ENCODE measurements at regions of chr6 and their contacts with region 1.

Region 1: DNA sequence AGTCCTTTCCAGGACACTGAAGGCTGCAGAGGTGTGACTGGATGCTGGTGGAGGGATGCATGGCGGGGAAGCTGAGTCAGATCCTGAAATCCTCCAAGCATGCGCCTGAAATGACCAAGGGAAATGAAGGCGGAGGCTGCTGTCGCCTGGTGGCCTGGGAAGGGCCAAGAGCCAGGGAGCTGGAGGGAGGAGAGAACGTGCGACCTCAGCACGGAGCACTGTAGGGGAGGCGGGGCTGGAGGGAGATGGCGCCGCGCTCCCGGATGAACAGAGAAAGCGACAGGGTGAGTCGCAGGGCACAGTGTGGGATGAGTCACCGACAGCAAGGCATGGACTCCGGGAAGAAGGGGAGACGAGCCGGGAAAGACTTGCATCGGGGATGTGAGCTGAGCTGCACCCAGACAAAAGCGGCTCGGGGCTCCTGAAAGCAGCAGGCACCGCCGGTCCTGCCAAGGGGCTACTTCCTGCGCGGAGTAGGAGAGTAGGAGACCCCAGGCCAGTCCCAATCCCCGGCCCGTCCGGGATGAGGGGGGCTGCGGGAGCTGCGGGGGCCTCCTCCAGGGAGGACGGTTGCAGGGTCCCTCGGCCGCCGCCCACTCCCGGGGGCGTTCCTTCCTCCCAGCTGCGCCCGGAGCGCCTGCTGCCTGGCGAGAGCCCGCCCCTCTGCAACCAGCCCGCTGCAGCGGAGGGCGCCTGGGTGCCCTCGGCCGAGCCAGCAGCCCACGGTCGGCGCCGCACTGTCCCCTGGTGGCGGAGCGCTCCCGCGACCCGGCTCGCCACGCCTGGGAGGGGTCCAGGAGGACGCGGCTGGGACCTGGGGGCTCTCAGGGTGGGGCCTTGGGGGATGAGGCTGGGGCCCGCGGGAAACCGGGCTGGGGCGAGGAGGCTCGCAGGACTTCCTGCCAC is 11.0 kb upstream of the NQO2 start:
- DNase-seq: peak; percentile 77 to 98 (median 88)

Region 2: GRCh38 chr6:2744209-2744771 is 244.4 kb before region 1 on chr6:
- intact Hi-C with region 1: no loop called
- DNase-seq: peak in 6 of 10 donors; percentile 42 to 90 (median 67)

Region 3: GRCh38 chr6:2846873-2847224 is 141.8 kb before region 1 on chr6:
- intact Hi-C with region 1: loop called (anchors 1 kb)
- DNase-seq: no peak

Region 4: GRCh38 chr6:2952557-2953095 is 36.1 kb before region 1 on chr6:
- intact Hi-C with region 1: loop called (anchors 1 kb)
- DNase-seq: peak; percentile 36 to 95 (median 64)

Region 5: DNA sequence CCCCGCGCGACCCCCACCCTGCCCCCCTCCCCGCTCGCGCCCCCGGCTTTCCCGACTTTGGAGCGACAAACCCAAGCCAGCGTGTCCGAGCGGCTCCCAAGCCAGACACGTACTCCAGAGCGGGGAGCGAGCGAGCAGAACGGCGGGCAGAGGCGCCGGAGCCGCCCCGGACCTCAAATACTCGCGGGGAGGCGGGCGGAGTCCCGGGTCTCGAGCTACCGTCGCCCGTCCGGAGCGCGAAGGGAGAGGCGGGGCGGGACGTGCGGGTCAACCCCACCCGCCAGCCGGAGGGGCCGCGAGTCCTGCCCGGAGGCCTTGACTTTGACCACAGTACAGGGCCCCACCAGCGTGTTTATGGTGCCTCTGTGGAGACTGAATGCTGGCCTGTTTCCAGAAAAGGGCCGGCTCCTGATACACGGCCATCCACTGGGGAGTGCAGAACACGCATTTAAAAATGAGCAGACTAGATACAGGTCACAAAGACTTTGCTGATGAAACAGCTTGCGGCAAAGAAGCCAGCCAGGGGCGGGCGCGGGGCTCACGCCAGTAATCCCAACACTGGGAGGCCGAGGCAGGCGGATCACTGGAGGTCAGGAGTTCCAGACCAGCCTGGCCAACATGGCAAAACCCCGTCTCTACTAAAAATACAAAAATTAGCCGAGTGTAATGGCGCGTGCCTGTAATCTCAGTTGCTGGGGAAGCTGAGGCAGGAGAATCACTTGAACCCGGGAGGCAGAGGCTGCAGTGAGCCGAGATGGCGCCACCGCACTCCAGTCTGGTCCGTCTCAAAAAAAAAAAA is 17.1 kb before region 1 on chr6 and contains the start of gene SERPINB6:
- intact Hi-C with region 1: loop called (anchors 2 kb)
- DNase-seq: peak; percentile 65 to 96 (median 66)

Region 6: DNA sequence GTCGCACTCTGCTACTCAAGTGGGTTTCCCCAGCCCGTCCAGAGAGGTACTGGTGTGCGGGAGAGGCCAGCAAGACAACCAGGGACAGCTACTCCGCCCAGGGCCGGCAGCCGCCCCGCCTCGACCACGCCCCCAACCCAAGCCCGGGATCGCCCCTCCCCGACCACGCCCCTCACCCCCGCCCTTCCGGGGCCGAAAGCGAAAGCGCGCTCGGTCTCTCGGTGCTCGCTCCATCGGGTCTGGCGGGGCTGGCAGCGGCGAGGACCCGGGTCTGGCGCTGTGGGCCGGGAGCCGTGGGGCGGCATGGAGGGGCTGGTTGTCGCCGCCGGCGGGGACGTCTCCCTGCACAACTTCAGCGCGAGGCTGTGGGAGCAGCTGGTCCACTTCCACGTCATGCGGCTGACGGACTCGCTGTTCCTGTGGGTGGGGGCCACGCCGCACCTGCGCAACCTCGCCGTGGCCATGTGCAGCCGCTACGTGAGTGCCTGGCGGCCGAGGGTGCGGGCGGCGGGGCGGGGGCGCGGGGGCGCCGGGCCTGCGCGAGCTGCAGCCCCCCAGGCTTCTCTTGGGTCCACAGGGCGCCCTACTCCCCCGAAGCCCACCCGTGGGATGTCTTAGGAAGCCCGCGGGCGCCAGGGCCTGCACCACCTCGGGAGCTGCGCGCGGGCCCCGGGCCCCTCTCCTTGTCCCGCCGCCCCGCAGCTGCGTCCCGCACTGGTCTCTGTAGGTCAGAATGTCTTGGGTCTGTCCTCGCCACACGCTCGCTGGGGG is 270.2 kb after region 1 on chr6 and contains the start of gene PSMG4:
- intact Hi-C with region 1: loop called (anchors 10 kb)
- DNase-seq: peak; percentile 88 to 99 (median 94)